Calu3 (cell line): ENCODE measurements at regions of chr3 and their contacts with region 1.

Region 1: DNA sequence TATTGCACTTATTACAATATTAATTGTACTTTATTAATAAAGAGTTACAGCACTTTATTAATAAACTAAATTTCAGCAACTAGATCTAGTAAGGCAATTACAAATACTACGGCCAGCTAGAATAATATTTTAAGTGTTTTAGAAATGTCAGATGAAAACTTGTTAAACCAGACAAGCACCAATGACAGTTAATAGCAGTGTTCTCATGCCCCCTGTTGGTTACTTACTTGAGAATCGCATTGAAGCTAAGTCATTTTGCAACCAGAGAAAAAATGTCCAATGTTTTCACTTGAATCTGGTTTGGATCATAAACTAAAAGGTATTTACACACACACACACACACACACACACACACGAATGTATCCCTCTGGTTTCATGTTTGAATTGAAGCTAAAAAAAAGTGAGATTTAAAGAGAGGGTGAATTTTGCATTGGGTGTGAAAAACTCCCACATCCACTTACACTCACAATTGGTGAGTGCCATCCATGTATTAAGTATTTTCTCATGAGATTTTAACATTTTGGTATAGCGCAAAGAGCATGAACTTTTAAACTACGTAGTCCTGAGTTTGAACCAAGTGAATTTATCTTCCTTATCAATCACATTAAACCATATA is 347.7 kb downstream of the ZBBX start:
- DNase-seq: peak; percentile 56
- H3K4me3 Mint-ChIP-seq: no peak overlapping the region
- H3K27ac Mint-ChIP-seq: no peak overlapping the region
- H3K4me1 Mint-ChIP-seq: peaks cover 14% of the 10 kb centered on the region
- H3K27me3 Mint-ChIP-seq: no peaks in the 10 kb centered on the region
- CTCF ChIP-seq: peak; percentile 57

Region 2: GRCh38 chr3:165254812-165255211 is 1777.6 kb before region 1 on chr3:
- CTCF ChIA-PET with region 1: no interaction called
- intact Hi-C with region 1: loop called (anchors 1 kb)
- DNase-seq: peak; percentile 42
- H3K4me3 Mint-ChIP-seq: no peak overlapping the region
- H3K27ac Mint-ChIP-seq: no peak overlapping the region
- H3K4me1 Mint-ChIP-seq: no peaks in the 10 kb centered on the region
- H3K27me3 Mint-ChIP-seq: no peaks in the 10 kb centered on the region
- CTCF ChIP-seq: peak; percentile 57

Region 3: DNA sequence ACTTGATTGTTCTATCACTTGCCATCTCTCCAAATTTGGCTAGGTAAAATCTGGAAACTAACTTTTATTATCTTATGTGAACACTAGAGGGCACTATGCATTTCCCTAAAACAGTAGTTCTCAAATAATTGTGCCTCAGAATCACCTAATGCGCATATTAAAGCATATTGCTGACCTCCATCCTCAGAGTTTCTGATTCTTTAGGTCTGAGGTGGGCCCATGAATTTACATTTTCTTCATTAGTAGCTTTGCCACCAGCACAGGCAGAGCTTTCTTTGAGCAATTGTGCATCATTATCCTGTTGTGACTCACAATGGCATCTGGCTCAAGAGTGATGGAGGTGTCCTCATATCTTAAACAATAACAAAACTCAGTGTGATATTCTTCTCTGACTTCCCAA is 1177.7 kb before region 1 on chr3:
- CTCF ChIA-PET with region 1: no interaction called
- intact Hi-C with region 1: loop called (anchors 2 kb)
- DNase-seq: no peak
- H3K4me3 Mint-ChIP-seq: no peak overlapping the region
- H3K27ac Mint-ChIP-seq: no peak overlapping the region
- H3K4me1 Mint-ChIP-seq: peaks cover 7% of the 10 kb centered on the region
- H3K27me3 Mint-ChIP-seq: no peaks in the 10 kb centered on the region
- CTCF ChIP-seq: peak; percentile 90

Region 4: DNA sequence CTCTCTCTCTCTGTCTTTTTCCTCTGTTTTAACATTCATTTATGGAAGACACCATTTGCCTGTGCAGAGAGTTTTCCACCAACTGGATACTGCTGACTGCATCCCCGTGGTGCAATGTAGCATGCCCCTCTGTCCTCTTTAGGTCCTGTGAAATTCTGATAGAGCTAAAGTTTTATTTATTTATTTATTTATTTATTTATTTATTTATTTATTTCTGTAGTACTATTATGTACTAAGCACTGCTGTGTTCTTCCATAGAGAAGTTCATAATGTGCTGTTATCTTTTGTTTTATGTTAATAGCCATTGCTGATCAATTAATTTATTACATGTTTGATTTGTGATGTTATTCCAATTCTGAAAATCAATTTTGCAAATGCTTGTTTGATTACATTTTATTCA is 402.2 kb before region 1 on chr3:
- CTCF ChIA-PET with region 1: no interaction called
- intact Hi-C with region 1: no loop called
- DNase-seq: no peak
- H3K4me3 Mint-ChIP-seq: no peak overlapping the region
- H3K27ac Mint-ChIP-seq: no peak overlapping the region
- H3K4me1 Mint-ChIP-seq: no peaks in the 10 kb centered on the region
- H3K27me3 Mint-ChIP-seq: no peaks in the 10 kb centered on the region
- CTCF ChIP-seq: no peak

Region 5: DNA sequence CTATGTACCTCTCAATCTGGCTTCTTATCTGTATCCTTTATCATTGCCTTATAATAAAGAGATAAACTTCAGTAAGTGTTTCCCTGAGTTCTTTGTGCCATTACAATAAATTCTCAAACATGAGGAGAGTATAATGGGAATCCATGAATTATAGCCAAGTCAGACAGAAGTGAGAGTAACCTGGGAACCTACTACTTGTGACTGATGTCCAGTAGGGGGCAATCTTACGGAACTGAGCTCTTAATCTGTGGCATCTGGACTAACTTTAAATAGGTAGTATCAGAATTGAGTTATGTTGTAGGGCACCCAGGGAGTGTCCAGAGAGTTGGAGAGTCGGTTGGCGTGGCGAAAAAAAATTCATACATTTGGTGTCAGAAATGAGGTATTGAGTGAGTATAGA is 194.8 kb before region 1 on chr3:
- CTCF ChIA-PET with region 1: interaction called, 3 read pairs
- intact Hi-C with region 1: loop called (anchors 5 kb)
- DNase-seq: peak; percentile 19
- H3K4me3 Mint-ChIP-seq: no peak overlapping the region
- H3K27ac Mint-ChIP-seq: no peak overlapping the region
- H3K4me1 Mint-ChIP-seq: peaks cover 8% of the 10 kb centered on the region
- H3K27me3 Mint-ChIP-seq: no peaks in the 10 kb centered on the region
- CTCF ChIP-seq: peak; percentile 43

Region 6: GRCh38 chr3:167172377-167172776 is 140.0 kb after region 1 on chr3:
- CTCF ChIA-PET with region 1: no interaction called
- intact Hi-C with region 1: no loop called
- DNase-seq: no peak
- H3K4me3 Mint-ChIP-seq: no peak overlapping the region
- H3K27ac Mint-ChIP-seq: no peak overlapping the region
- H3K4me1 Mint-ChIP-seq: peaks cover 6% of the 10 kb centered on the region
- H3K27me3 Mint-ChIP-seq: no peaks in the 10 kb centered on the region
- CTCF ChIP-seq: no peak

Region 7: GRCh38 chr3:167350245-167350862 is 318.0 kb after region 1 on chr3:
- CTCF ChIA-PET with region 1: no interaction called
- intact Hi-C with region 1: loop called (anchors 2 kb)
- DNase-seq: peak; percentile 48
- H3K4me3 Mint-ChIP-seq: no peak overlapping the region
- H3K27ac Mint-ChIP-seq: no peak overlapping the region
- H3K4me1 Mint-ChIP-seq: peaks cover 15% of the 10 kb centered on the region
- H3K27me3 Mint-ChIP-seq: no peaks in the 10 kb centered on the region
- CTCF ChIP-seq: peak; percentile 79

Region 8: DNA sequence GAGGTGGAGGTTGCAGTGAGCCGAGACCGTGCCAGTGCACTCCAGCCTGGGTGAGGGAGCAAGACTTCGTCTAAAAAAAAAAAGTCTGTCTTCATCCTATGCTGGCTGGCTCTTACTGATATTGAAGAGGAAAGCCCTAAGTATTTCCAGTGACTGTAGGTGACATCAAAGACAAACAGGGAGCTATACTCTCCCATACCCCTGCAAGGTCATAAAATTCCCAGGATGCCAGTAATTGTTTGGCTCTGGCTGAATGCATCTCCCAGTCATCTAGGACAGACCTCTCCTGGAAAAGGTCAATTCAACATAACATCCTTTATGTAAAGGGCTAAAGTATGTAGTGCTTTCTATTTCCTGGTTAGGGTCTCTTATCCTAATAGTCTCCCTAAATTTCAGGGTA is 339.8 kb after region 1 on chr3:
- CTCF ChIA-PET with region 1: no interaction called
- intact Hi-C with region 1: no loop called
- DNase-seq: no peak
- H3K4me3 Mint-ChIP-seq: no peak overlapping the region
- H3K27ac Mint-ChIP-seq: no peak overlapping the region
- H3K4me1 Mint-ChIP-seq: no peaks in the 10 kb centered on the region
- H3K27me3 Mint-ChIP-seq: no peaks in the 10 kb centered on the region
- CTCF ChIP-seq: no peak